ENCODE measurements at regions of chr3 and their contacts with region 1.

Region 1: DNA sequence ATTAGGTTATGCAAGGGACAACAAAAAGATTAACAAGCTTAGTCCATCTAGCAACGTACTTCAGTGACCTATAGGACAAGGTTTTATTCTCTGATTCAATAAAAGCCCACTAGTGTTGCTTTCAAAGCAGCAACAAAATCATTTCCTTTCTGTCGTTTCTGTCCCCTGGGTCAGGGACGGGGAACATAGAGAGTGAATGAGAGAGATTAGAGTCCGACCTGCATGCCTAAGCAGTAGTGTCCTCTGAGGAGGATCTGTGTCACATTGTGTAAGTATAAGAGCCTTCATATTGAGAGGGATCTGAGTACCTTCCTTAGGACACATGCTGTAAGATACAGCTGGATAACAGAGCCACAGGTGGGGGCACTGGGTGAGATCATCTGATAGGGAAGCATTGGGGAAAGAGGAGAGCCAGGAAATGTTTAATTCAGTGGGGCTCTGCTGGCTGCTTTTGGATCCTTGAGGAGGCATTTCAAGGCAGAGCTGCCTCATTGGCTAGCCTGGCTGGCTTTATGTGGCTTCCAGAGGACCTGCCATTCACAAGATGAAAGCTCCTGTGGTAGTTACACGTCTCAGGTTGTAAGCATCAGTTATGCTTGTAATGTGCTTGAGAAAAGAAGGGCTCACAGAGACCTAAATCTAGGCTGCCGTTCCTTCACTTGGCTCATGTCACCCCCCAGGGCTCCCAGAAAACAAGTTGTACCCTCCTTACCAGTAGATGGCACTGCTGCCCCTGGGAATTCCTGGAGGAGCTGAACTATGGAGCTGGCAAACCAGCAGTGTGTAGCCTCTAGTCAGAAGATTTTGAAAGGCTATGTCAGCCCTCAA is 2.7 kb downstream of the TMEM108 start:
- DNase-seq: peak; percentile 47 to 87
- H3K4me3 ChIP-seq: no peak overlapping the region
- H3K27ac ChIP-seq: no peak overlapping the region
- H3K4me1 ChIP-seq: peaks cover 0 to 8% (median 7%) of the 10 kb centered on the region in 4 experiments; a peak in 4 of 7 replicates
- H3K27me3 ChIP-seq: peaks cover 0 to 18% (median 9%) of the 10 kb centered on the region in 4 experiments; a peak in 5 of 7 replicates
- CTCF ChIP-seq: peak; percentile 60 to 92 (median 89)
- EP300 ChIP-seq: no peak
- POLR2A ChIP-seq: no peak
- RAD21 ChIP-seq: peak; percentile 96 to 97

Region 2: DNA sequence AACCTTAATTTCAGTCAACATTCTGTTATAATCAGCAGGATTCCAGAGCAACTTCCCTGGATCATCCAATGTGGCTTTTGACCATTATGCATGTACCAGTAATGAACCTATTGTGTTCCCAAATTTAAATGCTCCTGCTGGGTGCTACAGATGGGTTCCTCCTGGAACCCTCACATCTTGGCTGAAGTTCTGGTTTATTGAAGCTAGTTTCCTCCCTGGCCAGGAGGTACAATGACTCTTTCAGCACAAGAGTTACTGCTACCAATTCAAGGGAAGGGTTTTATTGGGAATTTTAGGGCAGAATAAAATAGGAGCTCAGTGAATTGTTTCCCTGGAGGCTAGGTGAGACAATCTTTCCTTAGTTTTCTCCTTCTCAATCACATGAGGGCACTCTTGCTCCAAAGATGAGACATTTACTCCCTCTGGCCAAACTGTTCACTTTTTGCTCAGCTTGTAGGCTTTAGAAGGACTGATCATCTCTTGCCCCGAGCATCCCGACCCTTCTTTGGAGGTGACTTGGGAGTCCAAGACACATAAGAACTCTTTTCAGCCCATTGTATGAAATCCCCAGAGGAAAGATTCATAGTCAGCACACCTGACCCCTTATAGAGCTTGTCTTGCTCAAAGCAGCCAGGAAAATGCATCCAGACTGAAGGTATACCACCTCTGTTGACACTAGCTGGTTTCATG is 309.9 kb before region 1 on chr3:
- CTCF ChIA-PET with region 1: interaction called, 93 read pairs
- POLR2A ChIA-PET with region 1: no interaction called
- DNase-seq: no peak
- H3K4me3 ChIP-seq: no peak overlapping the region
- H3K27ac ChIP-seq: no peak overlapping the region
- H3K4me1 ChIP-seq: no peaks in the 10 kb centered on the region; a peak in 1 of 7 replicates
- H3K27me3 ChIP-seq: no peaks in the 10 kb centered on the region
- CTCF ChIP-seq: peak in 2 of 3 experiments; percentile 70 to 74; a peak in 3 of 4 replicates
- EP300 ChIP-seq: no peak
- POLR2A ChIP-seq: no peak
- RAD21 ChIP-seq: peak; percentile 95

Region 3: DNA sequence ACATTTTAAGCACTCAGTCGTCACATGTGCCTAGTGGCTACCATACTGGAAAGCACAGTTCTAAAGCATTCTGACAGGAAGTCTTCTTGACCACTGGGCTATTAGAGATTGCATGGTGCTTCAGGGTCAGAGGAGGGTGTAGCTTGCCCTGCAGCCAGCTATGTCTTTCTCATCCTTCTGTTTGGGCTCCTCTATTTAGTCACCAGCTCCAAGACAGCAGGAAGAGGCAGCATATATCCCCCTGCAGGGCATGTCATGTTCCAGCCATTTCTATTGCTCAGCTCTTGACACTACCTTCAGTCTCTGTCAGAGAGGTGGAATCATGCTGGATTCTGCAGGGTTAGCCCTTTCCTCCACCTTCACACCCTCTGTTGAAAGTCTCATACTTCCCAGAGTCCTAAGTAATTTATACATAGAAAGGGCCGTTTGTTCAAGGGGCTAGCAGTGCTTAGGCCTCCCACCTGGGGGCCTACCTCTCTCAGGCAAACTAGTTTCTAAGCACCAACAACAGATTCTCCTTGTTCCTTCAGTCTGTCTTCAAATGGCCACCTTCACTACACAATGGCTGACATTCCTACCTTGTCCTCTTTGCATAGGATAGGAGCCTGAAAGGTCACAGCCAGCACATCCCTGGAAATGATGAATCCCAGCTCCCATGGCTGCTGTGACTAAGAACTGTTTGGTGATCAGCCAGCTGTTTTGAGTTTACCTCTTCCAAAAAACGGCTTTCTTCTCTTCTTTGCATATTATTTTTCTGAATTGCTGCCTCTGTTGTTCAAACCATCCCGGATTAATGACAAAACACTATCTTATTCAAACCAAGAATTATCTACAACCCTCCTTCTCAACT is 243.3 kb after region 1 on chr3:
- CTCF ChIA-PET with region 1: interaction called, 12 read pairs
- POLR2A ChIA-PET with region 1: no interaction called
- DNase-seq: peak in 1 of 2 experiments; percentile 25
- H3K4me3 ChIP-seq: no peak overlapping the region
- H3K27ac ChIP-seq: no peak overlapping the region
- H3K4me1 ChIP-seq: peaks cover 0 to 5% (median 0%) of the 10 kb centered on the region in 4 experiments; a peak in 2 of 7 replicates
- H3K27me3 ChIP-seq: no peaks in the 10 kb centered on the region
- CTCF ChIP-seq: peak in 2 of 3 experiments; percentile 38 to 60; a peak in 3 of 4 replicates
- EP300 ChIP-seq: no peak
- POLR2A ChIP-seq: no peak
- RAD21 ChIP-seq: peak; percentile 62 to 67

Region 4: GRCh38 chr3:133377396-133377795 is 336.5 kb after region 1 on chr3:
- CTCF ChIA-PET with region 1: interaction called, 173 read pairs
- POLR2A ChIA-PET with region 1: interaction called, 5 read pairs
- DNase-seq: no peak
- H3K4me3 ChIP-seq: no peak overlapping the region
- H3K27ac ChIP-seq: no peak overlapping the region
- H3K4me1 ChIP-seq: peaks cover 0 to 10% (median 8%) of the 10 kb centered on the region in 4 experiments; a peak in 5 of 7 replicates
- H3K27me3 ChIP-seq: no peaks in the 10 kb centered on the region
- CTCF ChIP-seq: peak in 2 of 3 experiments; percentile 45 to 55; a peak in 3 of 4 replicates
- EP300 ChIP-seq: no peak
- POLR2A ChIP-seq: no peak
- RAD21 ChIP-seq: peak; percentile 71 to 72

Region 5: GRCh38 chr3:133401374-133402135 is 360.6 kb after region 1 on chr3:
- CTCF ChIA-PET with region 1: interaction called, 11 read pairs
- POLR2A ChIA-PET with region 1: no interaction called
- DNase-seq: no peak
- H3K4me3 ChIP-seq: no peak overlapping the region
- H3K27ac ChIP-seq: no peak overlapping the region
- H3K4me1 ChIP-seq: peaks cover 0 to 4% (median 0%) of the 10 kb centered on the region in 4 experiments; a peak in 2 of 7 replicates
- H3K27me3 ChIP-seq: no peaks in the 10 kb centered on the region
- CTCF ChIP-seq: no peak
- EP300 ChIP-seq: no peak
- POLR2A ChIP-seq: no peak
- RAD21 ChIP-seq: no peak